AG04450 (cell line): ENCODE measurements at regions of chr19 and their contacts with region 1.

Region 1: GRCh38 chr19:12847159-12848139 is 9.1 kb downstream of the MAST1 start:
- DNase-seq: no peak
- H3K4me3 ChIP-seq: peak overlapping the region; percentile 42
- H3K27ac ChIP-seq: no peak overlapping the region
- H3K27me3 ChIP-seq: peaks cover 12% of the 10 kb centered on the region
- CTCF ChIP-seq: peak; percentile 88

Region 2: DNA sequence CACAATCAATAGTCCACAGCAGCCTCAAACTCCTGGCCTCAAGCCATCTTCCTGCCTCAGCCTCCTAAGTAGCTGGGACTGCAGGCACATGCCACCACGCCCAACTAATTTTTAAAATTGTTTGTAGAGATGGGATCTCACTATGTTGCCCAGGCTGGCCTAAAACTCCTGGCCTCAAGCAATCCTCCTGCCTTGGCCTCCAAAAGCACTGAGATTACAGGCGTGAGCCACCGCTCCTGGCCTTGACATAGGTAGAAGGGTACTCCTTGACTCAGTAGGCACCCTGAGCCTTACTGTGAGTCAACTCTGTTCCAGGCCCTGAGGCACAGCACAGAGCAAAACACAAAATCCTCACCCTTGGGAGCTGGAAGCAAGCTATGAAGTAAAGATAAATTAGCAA is 131.5 kb before region 1 on chr19:
- CTCF ChIA-PET with region 1: interaction called, 10 read pairs
- POLR2A ChIA-PET with region 1: no interaction called
- DNase-seq: no peak
- H3K4me3 ChIP-seq: no peak overlapping the region
- H3K27ac ChIP-seq: no peak overlapping the region
- H3K27me3 ChIP-seq: no peaks in the 10 kb centered on the region
- CTCF ChIP-seq: no peak

Region 3: GRCh38 chr19:12796146-12797071 is 51.0 kb before region 1 on chr19:
- CTCF ChIA-PET with region 1: interaction called, 16 read pairs
- POLR2A ChIA-PET with region 1: interaction called, 3 read pairs
- DNase-seq: no peak
- H3K4me3 ChIP-seq: no peak overlapping the region
- H3K27ac ChIP-seq: peak overlapping the region; percentile 39
- H3K27me3 ChIP-seq: no peaks in the 10 kb centered on the region
- CTCF ChIP-seq: peak; percentile 96

Region 4: GRCh38 chr19:12825254-12826131 is 22.0 kb before region 1 on chr19:
- CTCF ChIA-PET with region 1: interaction called, 11 read pairs
- POLR2A ChIA-PET with region 1: no interaction called
- DNase-seq: no peak
- H3K4me3 ChIP-seq: no peak overlapping the region
- H3K27ac ChIP-seq: no peak overlapping the region
- H3K27me3 ChIP-seq: peaks cover 9% of the 10 kb centered on the region
- CTCF ChIP-seq: peak; percentile 33; the same call in 1 of the 2 replicates

Region 5: DNA sequence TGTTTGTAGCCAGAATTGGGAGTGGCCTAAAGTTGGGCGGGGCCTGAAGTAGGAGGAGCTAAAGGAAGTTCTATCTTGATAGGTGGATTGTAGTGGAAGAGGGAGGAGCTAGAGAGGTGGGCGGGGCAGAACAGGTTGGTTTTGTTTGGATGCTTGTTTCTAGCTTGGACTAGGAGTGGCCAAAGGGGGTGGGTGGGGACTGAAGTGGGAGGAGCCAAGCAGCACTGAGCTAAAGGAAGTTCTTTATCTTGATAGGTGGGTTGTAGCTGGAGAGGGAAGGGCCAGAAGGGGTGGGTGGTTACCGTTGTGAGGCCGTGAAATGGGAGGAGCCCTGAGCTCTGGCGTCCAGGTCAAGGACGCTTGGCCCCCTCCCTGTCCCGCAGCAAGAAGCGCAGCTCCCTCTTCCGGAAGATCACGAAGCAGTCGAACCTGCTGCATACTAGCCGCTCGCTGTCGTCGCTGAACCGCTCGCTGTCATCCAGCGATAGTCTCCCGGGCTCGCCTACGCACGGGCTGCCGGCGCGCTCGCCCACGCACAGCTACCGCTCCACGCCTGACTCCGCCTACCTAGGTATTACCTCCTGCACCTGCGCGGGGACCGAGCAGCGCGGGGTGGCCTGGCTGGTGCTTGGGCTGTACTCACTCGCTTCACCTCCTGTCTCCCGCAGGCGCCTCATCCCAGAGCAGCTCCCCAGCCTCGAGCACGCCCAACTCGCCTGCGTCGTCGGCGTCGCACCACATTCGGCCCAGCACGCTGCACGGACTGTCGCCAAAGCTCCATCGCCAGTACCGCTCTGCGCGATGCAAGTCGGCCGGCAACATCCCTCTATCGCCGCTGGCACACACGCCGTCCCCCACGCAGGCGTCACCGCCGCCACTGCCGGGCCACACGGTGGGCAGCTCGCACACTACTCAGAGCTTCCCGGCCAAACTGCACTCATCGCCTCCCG is 25.8 kb after region 1 on chr19:
- CTCF ChIA-PET with region 1: interaction called, 13 read pairs
- POLR2A ChIA-PET with region 1: no interaction called
- DNase-seq: no peak
- H3K4me3 ChIP-seq: no peak overlapping the region
- H3K27ac ChIP-seq: no peak overlapping the region
- H3K27me3 ChIP-seq: no peaks in the 10 kb centered on the region
- CTCF ChIP-seq: no peak